Endothelial cell of umbilical vein (primary cell): ENCODE measurements at regions of chr1 and their contacts with region 1.

Region 1: GRCh38 chr1:112674439-112674985 is at the start of gene MOV10:
- DNase-seq: peak; percentile 81
- H3K4me3 ChIP-seq: peak within 1 kb of the TSS; percentile 67 to 88 (median 82)
- H3K27ac ChIP-seq: peak within 1 kb of the TSS; percentile 69
- H3K4me1 ChIP-seq: peaks cover 21% of the 10 kb centered on the region
- H3K27me3 ChIP-seq: no peaks in the 10 kb centered on the region
- CTCF ChIP-seq: no peak
- POLR2A ChIP-seq: peak; percentile 56
- total RNA-seq, gene MOV10: 103 and 113 TPM in 2 replicates

Region 2: GRCh38 chr1:112605633-112606327 is 68.7 kb before region 1 on chr1:
- CTCF ChIA-PET with region 1: no interaction called
- POLR2A ChIA-PET with region 1: no interaction called
- dilution Hi-C with region 1: no loop called
- intact Hi-C with region 1: no loop called
- DNase-seq: no peak
- H3K4me3 ChIP-seq: no peak overlapping the region
- H3K27ac ChIP-seq: no peak overlapping the region
- H3K4me1 ChIP-seq: peaks cover 2% of the 10 kb centered on the region
- H3K27me3 ChIP-seq: no peaks in the 10 kb centered on the region
- CTCF ChIP-seq: no peak
- POLR2A ChIP-seq: no peak

Region 3: GRCh38 chr1:112637254-112638116 is 37.0 kb before region 1 on chr1:
- CTCF ChIA-PET with region 1: interaction called, 16 read pairs
- POLR2A ChIA-PET with region 1: no interaction called
- dilution Hi-C with region 1: no loop called
- intact Hi-C with region 1: loop called (anchors 2 kb)
- DNase-seq: no peak
- H3K4me3 ChIP-seq: no peak overlapping the region
- H3K27ac ChIP-seq: peak overlapping the region; percentile 66
- H3K4me1 ChIP-seq: peaks cover 26% of the 10 kb centered on the region
- H3K27me3 ChIP-seq: no peaks in the 10 kb centered on the region
- CTCF ChIP-seq: no peak
- POLR2A ChIP-seq: no peak

Region 4: DNA sequence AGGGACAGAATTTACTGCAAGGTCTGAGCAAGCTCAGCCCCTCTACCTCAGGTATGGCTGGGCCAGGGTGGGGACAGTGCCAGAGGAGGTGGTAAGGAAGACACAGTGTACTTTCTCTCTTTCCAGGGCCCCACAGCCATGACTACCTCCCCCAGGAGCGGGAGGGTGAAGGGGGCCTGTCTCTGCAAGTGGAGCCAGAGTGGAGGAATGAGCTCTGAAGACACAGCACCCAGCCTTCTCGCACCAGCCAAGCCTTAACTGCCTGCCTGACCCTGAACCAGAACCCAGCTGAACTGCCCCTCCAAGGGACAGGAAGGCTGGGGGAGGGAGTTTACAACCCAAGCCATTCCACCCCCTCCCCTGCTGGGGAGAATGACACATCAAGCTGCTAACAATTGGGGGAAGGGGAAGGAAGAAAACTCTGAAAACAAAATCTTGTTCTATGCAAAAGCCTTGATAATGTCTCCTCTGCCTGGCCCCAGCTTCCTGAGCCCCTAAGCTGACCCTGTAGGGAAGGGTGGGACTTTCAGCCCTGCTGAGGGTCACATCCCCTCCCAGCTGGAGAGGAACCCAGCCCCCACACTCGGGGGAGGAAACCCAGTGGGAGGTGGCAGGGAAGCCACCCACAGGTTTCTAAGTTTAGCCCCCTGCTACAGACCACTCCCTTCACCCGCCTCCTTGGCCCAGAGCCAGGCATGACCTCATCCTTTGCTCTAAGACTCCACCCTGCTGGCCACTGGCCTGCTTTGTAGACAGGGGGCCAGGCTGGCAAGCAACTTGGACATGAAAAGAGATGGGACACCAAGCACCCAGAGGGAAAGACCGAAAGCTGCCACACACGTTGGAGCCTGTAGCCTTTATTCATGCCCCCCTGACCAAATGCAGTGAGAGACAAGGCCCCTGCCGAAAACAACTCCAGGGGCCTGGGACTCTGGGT is 26.0 kb after region 1 on chr1:
- CTCF ChIA-PET with region 1: interaction called, 57 read pairs
- POLR2A ChIA-PET with region 1: interaction called, 19 read pairs
- dilution Hi-C with region 1: no loop called
- intact Hi-C with region 1: loop called (anchors 1 kb)
- DNase-seq: peak; percentile 100
- H3K4me3 ChIP-seq: no peak overlapping the region
- H3K27ac ChIP-seq: peak overlapping the region; percentile 88
- H3K4me1 ChIP-seq: peaks cover 67% of the 10 kb centered on the region
- H3K27me3 ChIP-seq: no peaks in the 10 kb centered on the region
- CTCF ChIP-seq: no peak
- POLR2A ChIP-seq: peak; percentile 83

Region 5: GRCh38 chr1:112706908-112707663 is 32.6 kb after region 1 on chr1 and contains the start of gene RHOC:
- CTCF ChIA-PET with region 1: interaction called, 33 read pairs
- POLR2A ChIA-PET with region 1: interaction called, 19 read pairs
- dilution Hi-C with region 1: no loop called
- intact Hi-C with region 1: loop called (anchors 1 kb)
- DNase-seq: peak; percentile 88
- H3K4me3 ChIP-seq: peak within 1 kb of the TSS; percentile 81 to 90 (median 89)
- H3K27ac ChIP-seq: peak within 1 kb of the TSS; percentile 88
- H3K4me1 ChIP-seq: peaks cover 40% of the 10 kb centered on the region
- H3K27me3 ChIP-seq: no peaks in the 10 kb centered on the region
- CTCF ChIP-seq: peak; percentile 97 to 98
- POLR2A ChIP-seq: peak; percentile 83
- total RNA-seq, gene RHOC: 652 and 699 TPM in 2 replicates